A673 (cell line): ENCODE measurements at regions of chr14 and their contacts with region 1.

Region 1: DNA sequence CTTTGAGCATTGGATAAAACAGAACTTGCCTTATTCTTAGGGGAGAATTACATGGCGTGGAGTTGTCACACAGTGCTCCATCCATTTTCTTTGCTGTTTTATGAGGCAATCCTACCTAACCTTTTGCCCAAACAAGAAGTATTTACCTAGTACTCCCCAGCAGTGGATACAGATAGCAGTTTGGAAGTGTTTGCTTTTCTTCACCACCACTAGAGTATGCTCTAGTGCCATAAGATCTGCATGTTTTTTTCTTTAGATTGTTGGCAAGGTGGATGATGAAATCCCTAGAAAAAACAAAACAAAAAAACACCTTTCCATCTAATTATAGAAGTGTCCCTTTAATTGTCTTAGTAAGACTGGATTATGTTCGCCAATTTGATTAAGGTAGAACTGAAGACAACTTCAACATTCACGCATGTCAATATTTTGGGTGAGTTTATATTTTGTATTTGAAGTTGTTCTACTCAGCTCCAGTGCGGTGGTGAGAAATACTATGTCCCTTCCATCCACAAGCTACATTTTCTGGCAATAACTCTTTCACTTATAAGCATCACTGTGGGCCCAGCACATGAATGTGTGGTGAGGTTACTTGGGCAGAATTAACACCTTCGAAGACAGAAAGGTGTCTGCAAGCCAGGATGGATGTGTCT is 23.6 kb upstream of the TMEM260 start:
- DNase-seq: peak; percentile 81
- H3K4me3 ChIP-seq: no peak overlapping the region
- H3K27ac ChIP-seq: peak overlapping the region; percentile 48
- H3K4me1 ChIP-seq: peaks cover 44% of the 10 kb centered on the region
- H3K27me3 ChIP-seq: no peaks in the 10 kb centered on the region
- CTCF ChIP-seq: peak; percentile 85

Region 2: DNA sequence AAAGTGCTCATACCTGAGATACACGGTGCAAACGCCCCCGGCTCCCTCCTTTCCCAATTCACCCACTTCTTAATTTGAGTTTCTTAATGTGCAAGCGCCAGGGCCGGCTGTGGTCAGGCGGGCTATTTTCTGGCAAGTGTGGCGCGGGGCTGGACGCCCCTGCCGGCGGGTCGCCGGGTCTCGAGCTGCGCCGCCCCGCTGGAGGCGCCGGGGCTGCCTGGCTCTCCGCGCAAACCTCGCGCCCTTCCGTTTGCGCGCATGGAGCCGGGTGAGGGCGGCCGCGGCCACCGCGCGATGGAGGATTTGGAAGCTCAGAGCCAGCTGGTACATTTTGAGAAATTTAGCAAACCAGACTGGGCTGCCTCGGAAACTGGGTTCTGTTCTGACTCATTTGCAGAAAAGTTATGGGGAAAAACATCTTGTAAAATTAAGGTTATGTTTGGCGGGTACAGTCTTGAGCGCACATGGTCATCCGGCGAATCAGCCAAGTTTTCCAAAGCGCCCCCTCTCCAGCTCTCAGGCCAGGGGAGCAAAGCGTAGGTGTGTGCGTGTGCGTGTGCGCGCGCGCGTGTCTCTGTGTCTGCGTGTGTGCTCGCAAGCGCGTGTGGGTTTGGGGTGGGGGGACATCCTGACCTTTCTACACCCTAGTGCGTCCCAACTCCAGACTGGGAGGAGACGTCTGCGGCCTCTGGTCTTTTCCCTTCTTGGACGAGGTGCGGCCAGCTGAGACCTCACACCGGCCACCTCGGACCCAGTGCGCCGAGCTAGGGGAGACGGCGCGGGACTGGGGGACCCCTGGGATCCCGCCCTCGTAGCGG is 260.7 kb after region 1 on chr14:
- CTCF ChIA-PET with region 1: no interaction called
- POLR2A ChIA-PET with region 1: no interaction called
- intact Hi-C with region 1: loop called (anchors 10 kb)
- DNase-seq: peak; percentile 67
- H3K4me3 ChIP-seq: peak overlapping the region; percentile 71
- H3K27ac ChIP-seq: peak overlapping the region; percentile 95
- H3K4me1 ChIP-seq: peaks cover 37% of the 10 kb centered on the region
- H3K27me3 ChIP-seq: no peaks in the 10 kb centered on the region
- CTCF ChIP-seq: no peak

Region 3: DNA sequence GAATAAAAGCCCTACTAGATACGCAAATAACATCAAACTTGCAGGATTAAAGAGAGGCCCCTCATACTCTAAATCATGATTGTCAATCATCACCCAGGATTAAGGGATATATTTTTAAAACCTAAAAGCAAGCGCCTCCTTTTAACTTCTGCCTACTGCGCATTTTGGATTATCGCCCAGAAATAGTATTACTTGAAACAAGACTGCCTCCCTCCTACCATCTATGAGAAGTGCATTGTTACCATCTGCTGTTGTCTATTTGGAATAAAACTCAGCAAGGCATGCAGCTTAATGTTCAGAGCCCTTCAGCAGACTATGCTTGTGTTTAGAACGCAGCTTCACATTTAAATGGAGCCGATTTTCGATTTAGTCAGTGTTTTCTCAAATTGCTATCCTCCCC is 633.0 kb after region 1 on chr14:
- CTCF ChIA-PET with region 1: no interaction called
- POLR2A ChIA-PET with region 1: no interaction called
- intact Hi-C with region 1: loop called (anchors 2 kb)
- DNase-seq: peak; percentile 90
- H3K4me3 ChIP-seq: no peak overlapping the region
- H3K27ac ChIP-seq: no peak overlapping the region
- H3K4me1 ChIP-seq: peaks cover 21% of the 10 kb centered on the region
- H3K27me3 ChIP-seq: no peaks in the 10 kb centered on the region
- CTCF ChIP-seq: peak; percentile 77

Region 4: GRCh38 chr14:57317316-57317715 is 761.3 kb after region 1 on chr14:
- CTCF ChIA-PET with region 1: no interaction called
- POLR2A ChIA-PET with region 1: no interaction called
- intact Hi-C with region 1: loop called (anchors 5 kb)
- DNase-seq: peak; percentile 93
- H3K4me3 ChIP-seq: no peak overlapping the region
- H3K27ac ChIP-seq: no peak overlapping the region
- H3K4me1 ChIP-seq: peaks cover 21% of the 10 kb centered on the region
- H3K27me3 ChIP-seq: no peaks in the 10 kb centered on the region
- CTCF ChIP-seq: peak; percentile 91

Region 5: DNA sequence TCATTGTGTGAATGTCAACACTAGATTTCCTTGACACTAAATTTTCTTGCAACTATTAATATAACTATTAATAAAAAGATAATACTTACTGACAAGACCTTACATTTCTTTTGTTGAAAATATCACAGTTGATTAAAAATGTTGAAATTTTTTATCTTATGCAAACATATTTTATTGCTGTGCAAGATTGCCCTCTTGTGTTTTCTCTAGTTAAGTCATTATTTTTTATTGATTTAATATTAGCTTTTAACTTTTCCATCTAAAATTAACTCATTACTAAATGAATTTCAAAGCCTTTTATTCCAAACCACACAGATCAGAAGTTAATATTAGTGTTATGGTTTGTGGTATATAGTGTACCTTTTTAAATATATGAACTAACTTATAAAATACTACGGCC is 822.6 kb after region 1 on chr14:
- CTCF ChIA-PET with region 1: no interaction called
- POLR2A ChIA-PET with region 1: no interaction called
- intact Hi-C with region 1: loop called (anchors 5 kb)
- DNase-seq: peak; percentile 27
- H3K4me3 ChIP-seq: no peak overlapping the region
- H3K27ac ChIP-seq: no peak overlapping the region
- H3K4me1 ChIP-seq: peaks cover 14% of the 10 kb centered on the region
- H3K27me3 ChIP-seq: no peaks in the 10 kb centered on the region
- CTCF ChIP-seq: peak; percentile 49; the same call in 1 of the 2 replicates